ENCODE measurements at regions of chr11 and their contacts with region 1.

Region 1: GRCh38 chr11:10933455-10934292 is 75.8 kb upstream of the ZBED5 start:
- DNase-seq: peak; percentile 79 to 97 (median 91)

Region 2: GRCh38 chr11:10857709-10858438 is 75.8 kb before region 1 on chr11 and contains the start of gene ZBED5:
- intact Hi-C with region 1: loop called (anchors 5 kb)
- DNase-seq: peak; percentile 96 to 100 (median 98)

Region 3: GRCh38 chr11:10875430-10876021 is 58.1 kb before region 1 on chr11:
- intact Hi-C with region 1: no loop called
- DNase-seq: no peak

Region 4: DNA sequence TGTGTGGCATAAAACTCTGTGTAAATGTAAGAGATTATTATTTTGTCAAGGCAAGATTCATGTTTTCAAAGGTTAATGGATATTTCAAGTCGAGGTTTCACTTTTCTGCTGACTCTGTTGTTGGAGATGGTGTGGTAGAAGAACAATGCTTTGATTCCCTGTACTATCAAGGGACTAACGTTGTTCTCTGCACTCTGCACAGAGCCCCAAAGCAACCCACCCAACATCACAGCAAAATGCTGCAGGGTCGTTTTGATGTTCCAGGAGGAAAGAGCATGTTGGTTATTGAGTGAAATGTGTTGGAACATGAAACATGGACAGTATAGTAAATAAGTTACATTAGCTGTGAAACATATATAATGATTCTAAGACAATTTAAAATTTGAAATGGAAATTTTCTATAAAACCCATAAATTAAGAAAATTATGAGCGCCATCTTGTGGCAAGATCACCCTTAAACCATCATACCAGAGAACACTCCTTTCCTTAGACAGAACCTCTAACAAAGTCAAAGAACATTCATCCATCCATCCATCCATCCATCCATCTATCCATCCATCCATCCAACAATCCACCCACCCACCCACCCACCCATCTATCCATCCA is 88.6 kb after region 1 on chr11:
- intact Hi-C with region 1: loop called (anchors 5 kb)
- DNase-seq: peak in 7 of 42 donors; percentile 8 to 56 (median 28)

Region 5: DNA sequence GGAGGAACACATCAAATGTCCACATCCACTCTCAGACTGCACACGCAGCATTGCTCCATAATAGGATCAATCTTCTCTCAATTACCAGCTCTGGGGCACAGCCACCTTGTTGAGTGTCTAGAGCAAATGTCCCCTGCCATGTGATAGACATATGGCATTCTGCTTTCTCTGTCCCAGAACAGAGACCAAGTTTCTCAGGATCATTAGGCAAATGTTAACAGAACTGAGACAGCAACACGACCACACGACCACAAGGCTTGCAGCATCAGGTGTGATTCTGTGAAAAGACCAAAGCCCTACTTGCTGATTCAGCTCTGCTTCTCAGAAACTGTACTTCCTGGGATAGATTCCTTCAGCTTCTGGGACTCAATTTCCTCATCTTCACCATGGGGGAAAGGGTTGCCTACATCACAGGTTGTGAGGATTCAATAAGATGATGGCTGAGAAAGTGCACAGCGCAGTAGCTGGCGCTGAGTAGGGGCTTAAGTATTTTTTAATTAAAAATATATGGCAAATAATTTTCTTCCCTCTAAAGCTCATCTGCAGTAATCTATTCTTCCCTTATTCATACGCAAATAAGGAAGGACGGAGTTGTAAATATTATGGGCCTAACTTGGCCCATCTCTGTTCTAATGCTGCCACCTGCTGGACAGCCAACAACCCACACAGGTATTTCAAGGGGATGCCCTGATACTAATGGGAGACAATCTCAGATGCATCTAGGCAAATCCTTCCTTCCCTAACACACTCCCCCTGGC is 853.8 kb after region 1 on chr11:
- intact Hi-C with region 1: loop called (anchors 2 kb)
- DNase-seq: peak; percentile 58 to 94 (median 84)

Measured in head of caudate nucleus (tissue), 42 donors.